ENCODE measurements at regions of chr3 and their contacts with region 1.

Region 1: DNA sequence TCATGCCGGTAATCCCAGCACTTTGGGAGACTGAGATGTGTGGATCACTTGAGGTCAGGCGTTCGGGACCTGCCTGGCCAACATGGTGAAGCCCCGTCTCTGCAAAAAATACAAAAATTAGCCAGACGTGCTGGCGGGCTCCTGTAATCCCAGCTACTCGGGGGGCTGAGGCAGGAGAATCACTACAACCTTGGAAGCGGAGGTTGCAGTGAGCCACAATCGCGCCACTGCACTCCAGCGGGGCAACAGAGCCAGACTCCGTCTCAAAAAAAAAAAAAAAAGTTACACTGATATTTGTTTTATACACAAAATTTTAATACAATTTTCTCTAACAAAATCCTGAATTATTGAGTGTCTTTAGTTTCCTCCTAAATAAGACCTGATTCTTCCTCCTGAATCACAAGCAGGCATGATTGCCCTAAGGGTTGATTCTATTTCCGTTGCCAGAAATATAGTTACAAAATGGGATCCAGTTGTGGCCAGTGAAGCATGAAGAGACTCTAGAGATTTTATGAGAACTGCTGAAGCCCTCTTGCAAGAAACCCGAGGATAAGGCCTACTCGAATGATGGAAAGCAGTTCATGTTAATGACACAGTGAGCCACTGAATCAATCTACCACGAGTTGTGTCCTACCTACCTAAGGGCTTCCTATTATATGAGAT is 9.6 kb upstream of the SMARCC1 start:
- DNase-seq: no peak

Region 2: GRCh38 chr3:47420511-47421484 is 370.5 kb before region 1 on chr3:
- intact Hi-C with region 1: loop called (anchors 5 kb)
- DNase-seq: peak; percentile 68 to 96 (median 89)

Region 3: DNA sequence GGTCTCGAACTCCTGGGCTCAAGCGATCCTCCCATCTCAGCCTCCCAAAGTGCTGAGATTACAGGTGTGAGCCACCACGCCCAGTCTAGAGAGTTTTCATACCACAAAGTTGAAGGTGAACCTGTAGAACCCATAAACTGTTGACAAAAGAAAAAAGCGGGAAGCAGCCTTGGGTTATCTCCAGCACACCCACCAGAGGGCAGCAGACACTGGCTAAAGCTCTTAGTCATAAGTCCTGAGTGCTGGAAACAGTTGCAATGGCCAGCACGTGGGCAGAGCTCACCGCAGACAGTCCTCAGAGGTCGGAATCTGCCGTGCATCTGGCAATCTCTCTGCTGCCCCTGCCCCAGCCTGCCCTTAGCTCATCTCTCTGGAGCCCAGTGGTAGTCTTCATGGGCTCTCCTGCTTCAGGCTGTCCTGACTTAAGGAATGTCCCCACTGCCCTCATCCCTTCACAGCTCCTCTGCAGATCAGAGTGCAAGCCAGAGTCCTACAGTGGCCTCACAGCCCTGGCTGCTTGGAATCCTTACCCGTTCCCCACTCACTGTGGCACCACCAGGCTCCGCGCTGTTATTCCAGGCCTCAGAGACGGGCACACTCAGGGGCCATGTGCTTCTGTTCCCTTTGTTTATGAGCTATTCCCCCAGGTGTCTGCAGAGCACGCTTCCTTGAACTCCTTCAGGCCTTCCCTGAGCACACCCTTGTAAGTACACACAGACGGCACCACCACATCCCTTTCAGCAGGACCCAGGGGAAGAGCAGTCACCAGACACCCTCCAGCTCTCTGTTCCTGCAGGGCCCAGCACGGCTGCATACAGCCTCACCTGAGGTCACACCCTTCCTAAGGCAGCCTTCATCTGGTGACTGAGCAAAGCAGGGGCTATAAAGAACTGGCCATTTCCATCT is 269.0 kb before region 1 on chr3:
- intact Hi-C with region 1: loop called (anchors 1 kb)
- DNase-seq: peak; percentile 65 to 93 (median 82)

Measured in head of caudate nucleus (tissue), 42 donors.